Activated CD4-positive, alpha-beta T cell treated with anti-CD3 and anti-CD28 coated beads for 36 hours (primary cell): ENCODE measurements at regions of chr22 and their contacts with region 1.

Region 1: DNA sequence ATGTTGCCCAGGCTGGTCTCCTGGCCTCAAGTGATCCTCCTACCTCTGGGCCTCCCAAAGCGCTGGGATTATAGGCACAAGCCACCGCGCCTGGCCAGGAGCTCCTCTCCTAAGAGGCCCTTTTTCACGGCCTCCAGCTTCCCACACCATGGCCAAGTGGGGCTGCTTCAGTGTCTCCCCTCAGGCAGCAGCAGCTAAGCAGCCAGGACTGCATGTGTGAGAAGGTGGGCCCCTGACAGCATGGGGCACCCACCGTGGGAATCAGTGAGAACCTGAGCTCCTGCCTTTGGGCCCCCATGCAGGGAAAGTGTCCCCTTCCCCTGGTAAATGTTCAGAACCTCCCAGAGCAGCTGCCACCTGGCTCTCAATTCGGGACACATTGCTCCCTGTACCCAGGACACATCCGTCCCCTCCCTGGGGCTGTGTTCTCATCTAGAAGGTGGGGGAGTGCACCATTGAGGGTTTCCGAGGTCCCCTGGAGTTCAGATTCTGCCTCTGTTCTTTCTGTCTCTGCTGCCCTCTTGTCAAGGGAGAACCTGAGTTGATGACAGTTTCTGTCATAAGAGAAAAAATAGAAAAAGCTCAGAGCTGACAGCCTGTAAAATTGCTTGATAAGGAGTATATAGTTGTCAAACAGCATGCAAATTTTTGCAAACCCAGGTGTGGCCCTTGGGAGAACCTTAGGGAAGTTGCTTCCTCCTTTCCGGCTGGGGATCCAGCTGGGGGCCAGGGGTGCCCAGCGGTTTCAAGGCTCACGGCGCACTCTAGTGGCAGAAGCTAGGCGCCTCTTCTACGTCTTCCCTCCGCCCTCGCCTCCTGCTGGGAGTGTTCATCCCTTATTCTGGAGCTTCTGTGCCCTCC is 29.7 kb downstream of the FAM83F start:
- DNase-seq: peak; percentile 82
- ATAC-seq: peak; percentile 85
- H3K4me3 Mint-ChIP-seq: no peak overlapping the region
- H3K27ac Mint-ChIP-seq: no peak overlapping the region
- H3K4me1 Mint-ChIP-seq: no peaks in the 10 kb centered on the region
- H3K27me3 Mint-ChIP-seq: no peaks in the 10 kb centered on the region

Region 2: DNA sequence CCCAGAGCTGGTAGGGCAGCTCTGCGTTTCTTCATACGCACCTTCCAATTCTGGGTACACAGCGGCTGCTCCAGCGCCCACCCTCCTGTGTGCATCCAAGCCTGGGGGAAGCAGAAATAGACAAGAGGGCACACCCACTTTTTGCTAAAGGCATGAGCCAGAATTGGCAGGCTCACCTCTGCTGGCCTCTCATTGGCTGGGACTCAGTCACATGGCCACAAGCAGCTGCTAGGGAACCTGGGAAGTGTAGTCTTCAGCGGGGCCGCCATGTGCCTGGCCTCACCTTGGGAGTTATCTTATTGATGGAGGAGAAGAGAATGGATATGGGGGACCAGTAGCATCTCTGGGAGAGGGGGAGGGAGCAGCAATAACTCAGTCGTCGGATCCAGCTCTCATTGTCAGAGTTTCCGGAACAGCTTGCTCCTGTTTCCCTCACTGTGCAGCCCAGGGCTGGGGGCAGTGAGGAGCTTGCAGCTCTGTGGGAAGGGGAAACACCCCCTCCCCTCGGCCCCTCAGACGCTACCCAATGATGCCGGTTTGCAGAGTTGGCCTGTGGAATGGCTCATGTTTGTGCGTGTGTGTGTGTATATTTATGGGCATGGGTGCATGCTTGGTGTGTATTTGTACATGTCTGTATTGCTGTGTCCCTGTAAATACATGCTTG is 534.2 kb before region 1 on chr22:
- CTCF ChIA-PET with region 1: interaction called, 3 read pairs
- POLR2A ChIA-PET with region 1: no interaction called
- intact Hi-C with region 1: loop called in 1 of 2 experiments (anchors 5 kb)
- DNase-seq: peak; percentile 89
- ATAC-seq: peak; percentile 100
- H3K4me3 Mint-ChIP-seq: no peak overlapping the region
- H3K27ac Mint-ChIP-seq: no peak overlapping the region
- H3K4me1 Mint-ChIP-seq: peaks cover 7% of the 10 kb centered on the region
- H3K27me3 Mint-ChIP-seq: no peaks in the 10 kb centered on the region

Region 3: GRCh38 chr22:39559454-39560105 is 464.9 kb before region 1 on chr22:
- CTCF ChIA-PET with region 1: interaction called, 4 read pairs
- POLR2A ChIA-PET with region 1: interaction called, 3 read pairs
- intact Hi-C with region 1: loop called in 1 of 2 experiments (anchors 1 kb)
- DNase-seq: peak; percentile 44
- ATAC-seq: no peak
- H3K4me3 Mint-ChIP-seq: no peak overlapping the region
- H3K27ac Mint-ChIP-seq: no peak overlapping the region
- H3K4me1 Mint-ChIP-seq: peaks cover 2% of the 10 kb centered on the region
- H3K27me3 Mint-ChIP-seq: peaks cover 19% of the 10 kb centered on the region

Region 4: GRCh38 chr22:39832627-39833074 is 191.8 kb before region 1 on chr22:
- CTCF ChIA-PET with region 1: no interaction called
- POLR2A ChIA-PET with region 1: no interaction called
- intact Hi-C with region 1: no loop called
- DNase-seq: no peak
- ATAC-seq: peak; percentile 16
- H3K4me3 Mint-ChIP-seq: peak overlapping the region; percentile 46
- H3K27ac Mint-ChIP-seq: no peak overlapping the region
- H3K4me1 Mint-ChIP-seq: peaks cover 10% of the 10 kb centered on the region
- H3K27me3 Mint-ChIP-seq: peaks cover 2% of the 10 kb centered on the region

Region 5: GRCh38 chr22:39927544-39927943 is 96.9 kb before region 1 on chr22:
- CTCF ChIA-PET with region 1: interaction called, 15 read pairs
- POLR2A ChIA-PET with region 1: no interaction called
- intact Hi-C with region 1: no loop called
- DNase-seq: peak; percentile 68
- ATAC-seq: peak; percentile 45
- H3K4me3 Mint-ChIP-seq: no peak overlapping the region
- H3K27ac Mint-ChIP-seq: no peak overlapping the region
- H3K4me1 Mint-ChIP-seq: peaks cover 38% of the 10 kb centered on the region
- H3K27me3 Mint-ChIP-seq: no peaks in the 10 kb centered on the region

Region 6: GRCh38 chr22:39940757-39941305 is 83.6 kb before region 1 on chr22:
- CTCF ChIA-PET with region 1: interaction called, 9 read pairs
- POLR2A ChIA-PET with region 1: no interaction called
- intact Hi-C with region 1: loop called in 1 of 2 experiments (anchors 5 kb)
- DNase-seq: no peak
- ATAC-seq: peak; percentile 39
- H3K4me3 Mint-ChIP-seq: peak overlapping the region; percentile 21
- H3K27ac Mint-ChIP-seq: peak overlapping the region; percentile 70
- H3K4me1 Mint-ChIP-seq: peaks cover 94% of the 10 kb centered on the region
- H3K27me3 Mint-ChIP-seq: no peaks in the 10 kb centered on the region

Region 7: GRCh38 chr22:40009292-40009769 is 15.1 kb before region 1 on chr22:
- CTCF ChIA-PET with region 1: interaction called, 11 read pairs
- POLR2A ChIA-PET with region 1: interaction called, 4 read pairs
- intact Hi-C with region 1: no loop called
- DNase-seq: no peak
- ATAC-seq: no peak
- H3K4me3 Mint-ChIP-seq: peak overlapping the region; percentile 63
- H3K27ac Mint-ChIP-seq: peak overlapping the region; percentile 66
- H3K4me1 Mint-ChIP-seq: peaks cover 19% of the 10 kb centered on the region
- H3K27me3 Mint-ChIP-seq: peaks cover 4% of the 10 kb centered on the region

Region 8: DNA sequence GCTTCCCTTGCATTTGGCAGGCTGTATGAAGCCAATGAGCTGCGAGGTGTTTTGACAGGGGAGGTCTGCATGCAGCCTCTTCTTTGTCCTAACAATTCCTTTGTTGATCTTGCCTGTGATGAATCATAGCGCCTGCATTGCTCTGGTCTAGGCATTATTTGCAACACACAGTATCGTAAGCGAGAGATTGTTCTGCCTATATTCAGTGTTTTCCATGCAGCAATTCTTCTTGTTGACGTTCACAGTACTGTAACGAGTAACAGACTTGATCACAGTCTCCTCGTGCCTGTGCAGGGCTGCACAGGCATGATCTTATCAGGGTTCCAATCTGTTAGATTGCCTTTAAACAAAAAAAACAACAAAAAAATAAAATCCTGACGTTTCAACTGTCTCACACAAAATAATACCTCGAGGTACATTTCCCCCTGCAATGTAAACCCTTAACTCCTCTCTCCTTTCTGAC is 307.9 kb after region 1 on chr22:
- CTCF ChIA-PET with region 1: no interaction called
- POLR2A ChIA-PET with region 1: no interaction called
- intact Hi-C with region 1: no loop called
- DNase-seq: peak; percentile 37
- ATAC-seq: peak; percentile 55
- H3K4me3 Mint-ChIP-seq: peak overlapping the region; percentile 59
- H3K27ac Mint-ChIP-seq: peak overlapping the region; percentile 84
- H3K4me1 Mint-ChIP-seq: peaks cover 90% of the 10 kb centered on the region
- H3K27me3 Mint-ChIP-seq: no peaks in the 10 kb centered on the region